ENCODE measurements at regions of chr4 and their contacts with region 1.

Region 1: DNA sequence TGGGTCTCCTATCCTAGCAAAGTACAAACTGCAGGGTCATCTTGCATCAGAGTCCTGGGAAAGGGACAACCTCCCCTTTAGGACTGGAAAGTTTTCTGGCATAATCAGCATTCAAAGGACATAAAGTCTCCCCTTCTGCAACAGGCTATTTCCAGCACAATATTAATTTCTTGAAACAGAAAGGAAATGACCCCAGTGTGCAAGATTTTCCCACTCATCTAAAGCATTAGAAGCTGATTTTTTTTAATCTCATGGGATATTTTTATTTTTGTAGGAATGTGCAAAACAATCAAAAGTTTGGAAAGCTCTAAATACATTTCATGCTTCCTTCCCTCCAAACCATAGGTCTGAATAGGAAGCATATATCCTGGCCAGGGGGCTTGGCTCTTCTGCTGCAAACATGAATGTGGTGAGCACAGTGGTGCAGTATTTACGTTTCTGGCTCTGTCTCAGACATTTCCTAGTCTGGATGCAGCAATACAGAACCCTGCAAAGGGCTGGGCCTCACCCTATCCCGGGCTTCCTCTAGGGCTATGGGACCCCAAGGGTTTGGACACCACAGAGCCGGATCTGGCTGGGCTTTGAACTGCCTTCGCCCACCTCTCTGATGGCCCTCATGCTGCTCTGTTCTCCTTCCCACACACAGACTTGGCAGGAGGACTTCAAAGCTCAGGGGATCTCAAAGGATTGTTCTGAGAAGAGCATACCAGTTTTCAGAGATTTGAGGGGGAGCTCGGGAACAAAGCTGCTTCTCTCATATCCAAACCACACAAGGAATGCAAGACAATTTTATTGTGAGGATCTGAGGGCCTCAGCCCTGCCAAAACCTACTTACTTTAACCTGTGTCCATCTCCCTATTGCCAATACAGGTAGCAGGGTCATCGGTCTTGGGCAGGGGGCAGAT is 64.9 kb downstream of the POLR2B start:
- DNase-seq: no peak

Region 2: DNA sequence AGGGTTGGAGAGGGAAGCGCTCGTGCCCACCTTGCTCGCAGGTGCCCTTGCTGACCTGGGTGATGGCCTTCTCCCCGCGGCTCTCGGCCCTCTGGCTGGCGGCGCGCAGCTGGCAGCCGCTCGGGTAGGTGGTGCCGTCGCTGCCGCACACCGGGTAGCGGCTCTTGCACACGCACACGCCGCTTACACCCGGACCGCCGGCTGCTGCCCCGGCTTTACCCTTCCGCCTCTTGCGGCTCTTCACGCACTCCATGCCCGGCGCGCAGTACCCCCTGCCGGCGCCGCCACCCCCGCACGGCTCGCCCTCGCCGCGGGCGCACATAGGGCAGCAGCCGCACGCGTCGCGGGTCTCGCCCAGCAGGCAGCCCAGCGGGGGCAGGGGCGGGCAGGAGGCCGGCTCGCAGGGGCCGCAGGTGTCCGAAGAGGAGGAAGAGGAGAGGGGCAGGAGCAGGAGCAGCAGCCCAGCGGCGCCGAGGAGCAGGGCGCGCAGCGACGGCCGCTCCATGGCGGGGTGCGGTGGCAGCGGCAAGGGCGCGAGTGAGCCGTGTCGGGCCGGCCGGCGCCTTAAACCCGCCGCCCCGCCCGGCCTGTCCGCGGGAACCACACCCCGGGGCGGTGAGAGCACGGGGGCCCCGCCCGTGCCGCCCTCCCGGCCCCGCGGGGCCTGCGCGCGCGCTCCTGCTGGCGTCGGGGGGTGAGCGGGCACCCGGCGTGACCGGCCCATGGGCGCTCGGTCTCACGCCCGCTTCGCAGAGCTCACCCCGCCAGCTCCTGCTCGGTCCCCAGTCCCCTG is 66.4 kb after region 1 on chr4 and contains the start of gene IGFBP7:
- intact Hi-C with region 1: loop called (anchors 5 kb)
- DNase-seq: peak; percentile 90
- total RNA-seq, gene IGFBP7: 1,930 to 2,920 TPM

Measured in posterior vena cava (tissue), 2 donors.